ENCODE measurements at regions of chr13 and their contacts with region 1.

Region 1: GRCh38 chr13:51452361-51453206 is at the start of gene INTS6:
- DNase-seq: peak; percentile 99 to 100
- H3K4me3 ChIP-seq: peak within 1 kb of the TSS; percentile 84 to 88
- H3K27ac ChIP-seq: peak within 1 kb of the TSS; percentile 99 to 100
- H3K4me1 ChIP-seq: peaks cover 0 to 7% of the 10 kb centered on the region in 2 donors
- H3K27me3 ChIP-seq: no peaks in the 10 kb centered on the region
- CTCF ChIP-seq: no peak
- POLR2A ChIP-seq: peak; percentile 98
- total RNA-seq, gene INTS6: 34.3 to 56.9 (median 53.0) TPM

Region 2: DNA sequence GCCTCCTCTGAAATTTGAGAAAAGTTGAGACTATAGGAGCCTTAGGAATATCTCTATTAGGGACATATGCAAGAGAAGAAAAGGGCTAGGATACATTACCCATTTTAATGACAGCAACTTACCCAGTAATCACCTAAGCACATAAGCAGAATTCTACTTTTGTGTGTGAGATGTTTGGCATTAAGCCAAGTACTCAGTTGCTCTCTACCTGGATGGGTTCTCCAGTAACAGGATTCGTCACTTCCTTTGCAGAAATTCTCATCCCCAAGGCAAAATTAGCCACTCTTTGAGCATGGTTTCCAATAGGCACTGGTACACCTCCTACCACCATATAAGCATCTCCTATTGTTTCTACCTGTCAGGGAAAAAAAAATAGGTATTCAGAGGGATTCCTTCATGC is 436.6 kb before region 1 on chr13:
- intact Hi-C with region 1: no loop called
- DNase-seq: no peak
- H3K4me3 ChIP-seq: no peak overlapping the region
- H3K27ac ChIP-seq: no peak overlapping the region
- H3K4me1 ChIP-seq: no peaks in the 10 kb centered on the region
- H3K27me3 ChIP-seq: no peaks in the 10 kb centered on the region
- CTCF ChIP-seq: no peak
- POLR2A ChIP-seq: no peak

Region 3: DNA sequence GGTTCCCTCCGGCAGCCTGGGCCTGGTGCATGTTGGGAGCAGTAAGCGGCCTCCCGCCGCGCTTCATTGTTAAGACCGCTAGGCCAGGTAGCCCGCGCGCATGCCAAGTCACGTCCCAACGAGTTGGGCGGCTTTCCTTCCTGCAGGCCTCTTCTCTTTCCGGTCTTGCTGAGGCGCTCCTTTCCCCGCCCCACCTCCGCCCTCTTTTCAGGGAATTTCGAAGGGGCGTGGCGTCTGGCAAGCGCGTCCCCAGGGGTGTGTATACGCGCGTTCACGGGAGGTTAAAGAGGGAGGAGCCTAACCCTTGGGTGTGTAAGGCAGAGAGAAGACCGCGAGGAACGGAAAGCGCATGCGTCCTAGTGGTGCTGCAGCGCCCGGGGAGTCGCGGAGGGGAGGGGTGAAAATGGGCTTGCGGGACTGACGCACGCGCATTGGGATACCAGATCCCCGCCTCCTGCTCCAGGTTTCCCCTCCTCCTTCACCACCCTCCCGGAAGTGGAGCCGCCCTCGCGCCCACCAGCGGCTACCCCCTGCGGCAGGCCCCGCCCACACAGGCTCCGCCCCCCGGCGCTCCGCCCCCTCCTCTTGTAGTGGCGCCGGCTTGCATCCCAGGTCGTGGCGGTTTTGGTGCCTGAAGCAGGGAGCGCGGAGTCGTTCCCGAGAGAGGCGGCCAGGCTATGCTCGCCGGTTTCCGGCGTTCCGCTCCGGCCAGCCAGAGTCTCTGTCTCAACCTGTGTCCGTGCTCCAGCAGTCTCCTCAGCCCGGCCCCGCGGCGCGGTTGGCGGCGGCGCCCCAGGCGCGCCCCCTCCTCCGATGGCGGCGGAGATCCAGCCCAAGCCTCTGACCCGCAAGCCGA is 131.5 kb after region 1 on chr13 and contains the start of gene WDFY2:
- intact Hi-C with region 1: loop called (anchors 2 kb)
- DNase-seq: peak; percentile 100
- H3K4me3 ChIP-seq: peak within 1 kb of the TSS; percentile 75 to 85
- H3K27ac ChIP-seq: peak within 1 kb of the TSS; percentile 91 to 92
- H3K4me1 ChIP-seq: no peaks in the 10 kb centered on the region
- H3K27me3 ChIP-seq: no peaks in the 10 kb centered on the region
- CTCF ChIP-seq: peak; percentile 37 to 62 (median 48)
- POLR2A ChIP-seq: peak; percentile 91 to 92
- total RNA-seq, gene WDFY2: 7.9 to 21.0 (median 9.1) TPM

Region 4: DNA sequence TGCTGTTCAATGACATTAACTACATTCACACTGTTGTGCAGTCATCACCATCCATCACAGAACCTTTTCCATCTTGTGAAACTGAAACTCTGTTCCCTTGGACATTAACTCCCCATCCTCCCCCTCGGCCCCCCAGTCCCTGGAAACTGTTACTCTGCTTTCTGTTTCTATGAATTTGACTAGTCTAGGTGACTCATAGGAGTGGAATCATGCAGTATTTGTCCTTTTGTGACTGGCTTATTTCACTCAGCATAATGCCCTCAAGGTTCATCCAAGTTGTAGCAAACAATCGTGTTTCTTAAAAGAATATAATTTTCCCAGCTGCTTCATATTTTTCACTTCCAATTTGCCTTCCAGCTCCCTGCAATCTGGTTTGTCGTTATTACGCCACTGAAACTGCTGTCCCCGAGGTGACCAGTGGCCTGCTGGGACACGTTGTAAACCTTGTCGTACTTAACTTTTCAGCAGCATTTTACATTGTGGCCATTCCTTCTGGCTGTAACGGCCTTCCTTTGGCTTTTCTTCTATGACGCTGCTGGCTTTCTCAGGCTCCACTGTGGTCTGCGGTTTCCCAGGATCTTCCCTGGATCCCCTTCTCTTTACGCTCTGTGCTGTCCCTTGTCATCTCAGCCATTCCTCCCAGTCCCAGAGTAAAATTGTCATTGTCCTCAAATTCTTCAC is 277.4 kb after region 1 on chr13:
- intact Hi-C with region 1: loop called (anchors 10 kb)
- DNase-seq: peak; percentile 75 to 81
- H3K4me3 ChIP-seq: no peak overlapping the region
- H3K27ac ChIP-seq: peak overlapping the region; percentile 65 to 68
- H3K4me1 ChIP-seq: peaks cover 0 to 6% of the 10 kb centered on the region in 2 donors
- H3K27me3 ChIP-seq: no peaks in the 10 kb centered on the region
- CTCF ChIP-seq: no peak
- POLR2A ChIP-seq: no peak

Region 5: DNA sequence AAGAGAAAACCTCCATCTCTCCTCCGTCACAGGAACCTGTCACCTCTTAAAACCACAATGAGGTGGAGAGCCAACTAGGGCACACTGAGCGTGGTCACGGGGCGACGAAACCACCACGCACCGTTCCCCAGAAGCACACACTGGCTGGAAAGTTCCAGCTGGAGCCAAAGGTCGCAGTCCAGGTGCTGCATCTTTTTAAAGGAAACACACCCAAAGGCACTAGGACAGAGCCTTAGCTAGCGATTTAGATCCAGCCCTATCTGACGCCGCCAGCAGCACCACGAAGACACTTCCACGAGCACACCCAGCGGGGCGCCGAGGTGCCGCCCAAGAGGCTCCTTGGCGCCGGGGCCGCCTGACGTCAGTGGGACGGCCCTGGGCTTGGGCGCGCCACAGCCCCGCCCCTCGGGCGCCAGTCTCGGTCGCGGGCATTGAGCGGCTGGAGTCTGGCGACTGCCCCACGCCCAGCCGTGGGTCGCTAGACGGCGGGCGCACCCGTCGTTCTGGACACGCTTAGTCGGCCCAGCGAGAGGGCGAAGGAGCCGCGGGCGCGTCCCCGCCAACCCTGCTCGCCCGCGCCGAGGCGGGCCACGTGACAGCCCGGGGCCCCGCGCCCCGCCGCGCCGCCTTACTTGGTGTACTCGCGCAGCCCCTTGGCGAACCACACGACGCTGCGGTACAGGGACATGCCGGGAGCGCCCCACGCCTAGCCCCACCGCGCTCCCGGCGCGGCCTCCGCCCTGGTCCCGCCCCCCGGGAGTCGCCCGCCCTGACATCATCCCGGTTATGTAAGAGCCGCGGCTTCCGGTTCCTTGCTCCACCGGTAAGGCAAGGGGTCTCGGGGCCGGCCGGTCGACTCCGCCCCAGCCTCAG is 351.1 kb after region 1 on chr13 and contains the start of gene DHRS12:
- intact Hi-C with region 1: loop called (anchors 10 kb)
- DNase-seq: peak; percentile 93 to 94
- H3K4me3 ChIP-seq: peak within 1 kb of the TSS; percentile 62 to 88
- H3K27ac ChIP-seq: peak within 1 kb of the TSS; percentile 99
- H3K4me1 ChIP-seq: peaks cover 4 to 14% of the 10 kb centered on the region in 2 donors
- H3K27me3 ChIP-seq: no peaks in the 10 kb centered on the region
- CTCF ChIP-seq: peak in 3 of 4 experiments; percentile 7 to 42 (median 16)
- POLR2A ChIP-seq: peak; percentile 73 to 97
- total RNA-seq, gene DHRS12: 5.4 to 18.8 (median 8.5) TPM